ENCODE measurements at regions of chr21 and their contacts with region 1.

Region 1: DNA sequence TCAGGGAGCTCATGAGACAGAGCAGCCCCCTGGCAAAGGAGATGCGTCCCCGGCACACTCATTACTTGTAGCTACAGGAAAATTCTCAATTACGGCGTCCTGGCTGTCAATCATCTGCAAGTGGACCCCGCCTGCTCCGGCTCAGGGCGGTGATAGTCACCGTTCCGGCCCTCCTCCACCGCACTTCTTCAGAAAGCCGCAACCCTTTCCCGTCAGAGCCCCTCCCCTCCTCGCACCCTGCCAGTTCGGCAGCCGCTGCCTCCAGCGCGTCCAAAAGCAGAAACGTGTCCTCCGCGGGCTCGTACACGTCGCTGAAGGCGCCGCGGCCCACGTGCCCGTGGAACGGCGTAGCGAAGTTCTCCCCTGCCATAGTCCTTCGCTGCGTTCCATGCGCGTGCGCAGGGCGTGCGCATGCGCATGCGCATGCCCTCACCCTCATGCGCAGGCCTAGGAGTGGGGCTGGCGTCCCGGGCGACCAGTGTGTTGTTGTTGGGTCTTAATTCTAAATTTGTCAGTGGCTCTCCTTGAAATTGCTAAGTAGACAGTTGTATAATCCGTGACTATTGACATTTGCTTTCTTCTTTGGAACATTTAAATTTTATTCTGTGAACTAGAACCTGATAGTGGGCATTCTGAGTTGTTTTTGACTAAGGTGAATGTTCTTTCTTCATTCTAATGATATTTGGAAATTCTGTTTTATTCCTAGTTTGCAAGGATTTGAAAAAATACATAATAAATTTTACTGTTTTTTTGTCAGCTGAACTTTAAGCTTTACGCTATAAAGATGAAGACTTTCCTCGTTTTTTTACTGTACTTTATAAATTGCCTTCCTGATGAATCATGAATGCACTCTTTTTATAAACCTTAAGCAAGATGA is 107.5 kb downstream of the LTN1 start:
- DNase-seq: peak; percentile 89
- H3K4me3 ChIP-seq: peak overlapping the region; percentile 72 to 98 (median 79)
- H3K27ac ChIP-seq: peak overlapping the region; percentile 80
- H3K4me1 ChIP-seq: peaks cover 5% of the 10 kb centered on the region
- H3K27me3 ChIP-seq: no peaks in the 10 kb centered on the region
- CTCF ChIP-seq: no peak

Region 2: DNA sequence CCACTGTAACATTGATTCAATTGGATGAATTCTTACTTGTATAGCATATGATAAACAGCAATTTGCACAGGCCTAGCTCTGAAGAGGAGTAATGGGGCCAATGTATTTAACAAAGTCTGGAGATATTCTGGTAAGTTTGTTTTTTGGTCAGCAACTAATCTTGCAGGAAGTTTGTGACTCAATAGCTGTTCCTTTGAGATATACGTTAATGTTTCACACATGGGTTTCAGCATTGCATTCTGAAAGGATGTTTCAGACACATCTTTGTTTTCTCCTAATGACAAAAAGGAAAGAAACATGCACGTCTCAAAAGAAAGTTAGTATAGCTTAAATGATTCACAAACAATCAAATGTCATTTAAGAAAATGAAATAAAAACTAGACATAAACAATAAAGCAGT is 58.4 kb after region 1 on chr21:
- CTCF ChIA-PET with region 1: no interaction called
- dilution Hi-C with region 1: no loop called
- in situ Hi-C with region 1: no loop called
- intact Hi-C with region 1: loop called (anchors 1 kb)
- DNase-seq: no peak
- H3K4me3 ChIP-seq: no peak overlapping the region
- H3K27ac ChIP-seq: no peak overlapping the region
- H3K4me1 ChIP-seq: no peaks in the 10 kb centered on the region
- H3K27me3 ChIP-seq: no peaks in the 10 kb centered on the region
- CTCF ChIP-seq: no peak